B cell (primary cell): ENCODE measurements at regions of chr18 and their contacts with region 1.

Region 1: DNA sequence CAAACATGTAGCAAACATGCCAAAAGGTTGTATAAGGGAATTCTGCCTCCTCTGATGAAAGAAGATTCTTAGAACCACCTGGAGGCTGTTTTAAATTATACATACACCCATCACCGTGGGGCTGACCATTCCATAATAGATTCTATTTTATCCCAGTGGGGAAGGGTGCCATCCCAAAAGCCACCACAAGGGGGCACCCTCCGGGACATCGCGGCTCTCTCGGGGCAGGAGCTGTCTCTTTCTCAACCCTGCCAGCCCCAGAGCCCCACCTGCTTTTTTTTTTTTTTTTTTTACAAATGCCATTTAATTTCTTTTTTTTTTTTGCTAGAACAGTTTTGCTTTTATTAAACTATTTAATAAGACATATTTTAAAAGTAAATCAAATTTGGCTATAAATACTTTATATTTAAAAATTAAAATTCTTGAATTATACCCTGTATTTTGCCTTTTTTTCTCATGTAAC is 8.6 kb upstream of the MTCL1 start:
- DNase-seq: peak; percentile 77
- ATAC-seq: peak; percentile 91
- H3K4me3 ChIP-seq: no peak overlapping the region
- H3K4me3 Mint-ChIP-seq: no peak overlapping the region
- H3K27ac ChIP-seq: peak overlapping the region in 1 of 2 donors; percentile 87
- H3K27ac Mint-ChIP-seq: peak overlapping the region; percentile 59
- H3K4me1 ChIP-seq: peaks cover 13 to 17% of the 10 kb centered on the region in 2 donors
- H3K4me1 Mint-ChIP-seq: peaks cover 13% of the 10 kb centered on the region
- H3K27me3 ChIP-seq: peaks cover 0 to 4% (median 0%) of the 10 kb centered on the region in 4 experiments
- H3K27me3 Mint-ChIP-seq: peaks cover 5% of the 10 kb centered on the region
- CTCF ChIP-seq: peak; percentile 97

Region 2: DNA sequence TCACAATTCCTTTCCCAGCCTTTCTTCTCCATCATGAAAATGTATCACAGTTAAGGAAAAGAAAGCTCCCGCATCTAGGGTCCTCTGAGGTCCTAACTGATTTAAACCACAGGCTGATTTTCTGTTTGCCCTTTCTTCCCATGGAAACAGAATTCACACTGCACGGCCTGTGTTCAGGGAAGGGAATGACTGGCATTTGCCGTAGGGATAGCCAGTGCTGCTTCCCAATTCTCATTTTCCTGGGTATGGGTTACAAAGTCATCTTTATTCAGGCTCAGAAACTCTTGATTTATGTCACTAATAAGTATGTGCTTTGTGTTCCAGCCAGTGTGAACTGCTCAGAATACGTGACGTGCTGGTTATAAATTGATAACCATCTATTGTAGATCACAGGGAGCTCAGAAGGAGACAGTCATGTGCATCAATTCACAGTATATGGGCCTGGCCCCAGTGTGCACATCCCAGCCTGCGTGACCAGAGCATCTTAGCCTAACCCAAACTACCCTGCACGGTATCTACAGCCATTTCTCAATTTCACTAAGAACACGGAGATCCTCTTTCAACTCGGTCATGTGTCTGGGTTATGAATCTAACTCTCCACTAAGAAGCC is 1302.6 kb before region 1 on chr18:
- CTCF ChIA-PET with region 1: no interaction called
- POLR2A ChIA-PET with region 1: no interaction called
- intact Hi-C with region 1: no loop called
- DNase-seq: no peak
- ATAC-seq: no peak
- H3K4me3 ChIP-seq: no peak overlapping the region
- H3K4me3 Mint-ChIP-seq: no peak overlapping the region
- H3K27ac ChIP-seq: no peak overlapping the region
- H3K27ac Mint-ChIP-seq: no peak overlapping the region
- H3K4me1 ChIP-seq: no peaks in the 10 kb centered on the region
- H3K4me1 Mint-ChIP-seq: no peaks in the 10 kb centered on the region
- H3K27me3 ChIP-seq: no peaks in the 10 kb centered on the region
- H3K27me3 Mint-ChIP-seq: no peaks in the 10 kb centered on the region
- CTCF ChIP-seq: no peak

Region 3: GRCh38 chr18:8601277-8602032 is 95.3 kb before region 1 on chr18:
- CTCF ChIA-PET with region 1: no interaction called
- POLR2A ChIA-PET with region 1: interaction called, 3 read pairs
- intact Hi-C with region 1: loop called (anchors 5 kb)
- DNase-seq: peak; percentile 75
- ATAC-seq: peak; percentile 74
- H3K4me3 ChIP-seq: peak overlapping the region in 1 of 5 experiments; percentile 32
- H3K4me3 Mint-ChIP-seq: peak overlapping the region; percentile 85
- H3K27ac ChIP-seq: peak overlapping the region; percentile 47 to 66
- H3K27ac Mint-ChIP-seq: peak overlapping the region; percentile 97
- H3K4me1 ChIP-seq: peaks cover 41 to 44% of the 10 kb centered on the region in 2 donors
- H3K4me1 Mint-ChIP-seq: peaks cover 53% of the 10 kb centered on the region
- H3K27me3 ChIP-seq: no peaks in the 10 kb centered on the region
- H3K27me3 Mint-ChIP-seq: no peaks in the 10 kb centered on the region
- CTCF ChIP-seq: no peak

Region 4: DNA sequence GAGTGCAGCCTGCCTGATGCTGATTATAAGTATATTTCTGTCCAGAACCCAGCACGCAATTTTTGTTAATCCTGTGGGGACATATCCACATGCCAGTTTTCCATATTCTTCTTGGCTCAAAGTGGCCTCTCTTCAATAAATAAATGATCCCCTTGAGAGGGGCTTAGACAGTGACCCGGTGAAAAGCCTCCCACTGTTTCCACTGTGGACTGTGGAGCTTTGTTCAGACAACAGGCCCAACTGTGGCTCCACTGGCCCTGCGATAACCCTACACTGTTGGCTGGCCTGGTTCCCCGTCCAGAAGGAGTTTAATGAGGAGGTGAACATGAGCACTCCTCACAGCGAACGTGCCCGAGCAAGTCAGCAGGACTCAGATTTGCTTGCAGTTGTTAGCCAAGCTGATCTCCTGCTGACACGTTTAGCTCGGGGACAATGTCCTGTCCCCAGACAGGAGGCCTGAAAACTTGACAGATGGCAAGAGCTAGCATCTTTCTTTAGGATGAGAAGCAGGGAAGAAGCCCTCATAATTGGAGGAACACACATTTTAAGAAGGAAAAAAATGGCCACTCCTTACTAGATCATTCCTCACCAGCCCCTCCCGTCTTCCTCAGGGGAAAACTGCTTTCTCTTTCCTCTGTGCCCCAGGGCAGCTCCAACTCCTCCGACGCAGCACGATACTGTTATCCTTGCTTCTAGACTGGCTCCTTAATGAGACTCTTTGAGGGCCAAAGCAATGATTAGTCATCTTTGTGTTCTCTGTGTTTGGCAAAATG is 11.5 kb before region 1 on chr18:
- CTCF ChIA-PET with region 1: interaction called, 17 read pairs
- POLR2A ChIA-PET with region 1: interaction called, 3 read pairs
- intact Hi-C with region 1: no loop called
- DNase-seq: no peak
- ATAC-seq: no peak
- H3K4me3 ChIP-seq: no peak overlapping the region
- H3K4me3 Mint-ChIP-seq: no peak overlapping the region
- H3K27ac ChIP-seq: no peak overlapping the region
- H3K27ac Mint-ChIP-seq: no peak overlapping the region
- H3K4me1 ChIP-seq: no peaks in the 10 kb centered on the region
- H3K4me1 Mint-ChIP-seq: no peaks in the 10 kb centered on the region
- H3K27me3 ChIP-seq: no peaks in the 10 kb centered on the region
- H3K27me3 Mint-ChIP-seq: peaks cover 5% of the 10 kb centered on the region
- CTCF ChIP-seq: no peak

Region 5: DNA sequence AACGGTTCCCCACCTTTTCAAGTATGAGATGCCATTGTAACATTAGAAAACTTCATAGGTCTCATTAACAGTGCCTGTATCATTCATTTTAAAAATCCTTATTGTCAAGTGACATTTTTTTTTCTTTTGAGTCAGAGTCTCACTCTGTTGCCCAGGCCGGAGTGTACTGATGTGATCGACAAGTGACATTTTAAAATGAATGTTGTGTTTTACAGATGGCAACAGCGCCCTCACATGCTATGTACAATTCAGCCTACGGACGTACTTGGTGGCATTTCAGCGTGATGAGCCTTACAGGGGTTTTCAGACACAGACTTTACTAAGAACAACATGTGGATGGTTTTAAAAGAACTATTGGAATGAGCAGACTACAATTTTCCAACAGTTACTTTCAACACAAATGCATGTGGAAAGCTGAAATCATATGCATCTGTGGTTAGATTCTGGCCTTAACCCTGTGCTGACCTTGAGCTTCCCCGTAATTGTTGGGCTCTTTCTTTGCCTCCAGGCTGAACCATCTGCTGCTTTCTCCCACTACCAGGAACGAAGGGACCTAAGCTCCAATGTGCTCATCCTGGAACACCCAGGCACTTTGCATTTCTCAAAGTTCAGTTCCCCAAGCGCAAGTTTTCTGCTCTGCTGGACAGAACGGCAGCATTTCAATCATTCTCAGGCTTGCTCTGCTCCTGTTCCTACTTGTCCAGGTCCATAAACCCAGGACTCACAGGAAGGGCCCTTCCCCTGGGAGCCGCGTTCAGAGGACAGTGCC is 285.8 kb after region 1 on chr18:
- CTCF ChIA-PET with region 1: interaction called, 57 read pairs
- POLR2A ChIA-PET with region 1: no interaction called
- intact Hi-C with region 1: no loop called
- DNase-seq: peak; percentile 74
- ATAC-seq: peak; percentile 71
- H3K4me3 ChIP-seq: no peak overlapping the region
- H3K4me3 Mint-ChIP-seq: no peak overlapping the region
- H3K27ac ChIP-seq: no peak overlapping the region
- H3K27ac Mint-ChIP-seq: peak overlapping the region; percentile 20
- H3K4me1 ChIP-seq: peaks cover 22 to 26% of the 10 kb centered on the region in 2 donors
- H3K4me1 Mint-ChIP-seq: peaks cover 27% of the 10 kb centered on the region
- H3K27me3 ChIP-seq: no peaks in the 10 kb centered on the region
- H3K27me3 Mint-ChIP-seq: no peaks in the 10 kb centered on the region
- CTCF ChIP-seq: peak; percentile 52

Region 6: DNA sequence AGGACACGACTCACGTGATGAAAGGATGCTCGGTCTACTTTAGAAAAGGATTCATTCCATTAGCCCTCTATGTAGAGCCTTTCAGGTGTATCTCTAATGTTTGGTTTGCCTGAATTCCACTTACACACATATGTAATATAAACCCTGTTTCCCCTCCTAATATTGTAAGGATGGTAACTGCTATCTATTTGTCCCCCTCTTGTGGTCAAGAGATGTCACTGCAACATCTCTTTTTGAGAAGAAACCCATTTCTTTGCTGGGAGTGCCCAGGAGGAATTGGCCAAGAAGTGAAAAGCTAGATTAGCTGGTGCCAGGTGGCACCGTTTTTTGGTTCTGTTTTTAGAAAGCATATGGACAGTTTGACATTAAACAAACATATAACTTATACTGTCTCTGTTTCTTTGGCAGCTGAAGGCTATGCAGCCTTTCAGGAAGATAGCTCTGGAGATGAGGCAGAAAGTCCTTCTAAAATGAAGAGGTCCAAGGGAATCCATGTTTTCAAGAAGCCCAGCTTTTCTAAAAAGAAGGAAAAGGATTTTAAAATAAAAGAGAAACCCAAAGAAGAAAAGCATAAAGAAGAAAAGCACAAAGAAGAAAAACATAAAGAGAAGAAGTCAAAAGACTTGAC is 819.8 kb after region 1 on chr18:
- CTCF ChIA-PET with region 1: interaction called, 3 read pairs
- POLR2A ChIA-PET with region 1: no interaction called
- intact Hi-C with region 1: loop called (anchors 1 kb)
- DNase-seq: peak; percentile 61
- ATAC-seq: peak; percentile 58
- H3K4me3 ChIP-seq: no peak overlapping the region
- H3K4me3 Mint-ChIP-seq: no peak overlapping the region
- H3K27ac ChIP-seq: no peak overlapping the region
- H3K27ac Mint-ChIP-seq: no peak overlapping the region
- H3K4me1 ChIP-seq: no peaks in the 10 kb centered on the region
- H3K4me1 Mint-ChIP-seq: no peaks in the 10 kb centered on the region
- H3K27me3 ChIP-seq: no peaks in the 10 kb centered on the region
- H3K27me3 Mint-ChIP-seq: no peaks in the 10 kb centered on the region
- CTCF ChIP-seq: peak; percentile 98